H1 (cell line): ENCODE measurements at regions of chr3 and their contacts with region 1.

Region 1: DNA sequence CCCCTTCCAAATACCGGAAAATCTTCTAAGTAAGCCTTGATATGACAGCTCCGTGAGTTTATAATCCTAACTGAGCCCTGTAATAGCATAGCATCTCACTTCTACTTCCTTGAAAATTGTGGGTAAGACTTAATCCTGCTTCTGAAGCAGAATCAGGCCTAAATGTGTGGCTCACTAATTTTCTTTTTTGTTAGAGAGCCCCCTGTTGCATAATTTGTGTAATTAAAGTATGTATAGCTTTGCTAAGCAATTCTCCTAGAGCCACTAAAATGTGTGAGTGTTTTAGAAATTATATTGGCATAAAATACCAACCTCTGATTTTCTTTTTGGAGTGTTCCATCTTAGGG is 304.4 kb downstream of the FGF12 start:
- DNase-seq: no peak
- H3K4me3 ChIP-seq: no peak overlapping the region
- H3K27ac ChIP-seq: no peak overlapping the region
- H3K4me1 ChIP-seq: no peaks in the 10 kb centered on the region
- H3K27me3 ChIP-seq: no peaks in the 10 kb centered on the region
- CTCF ChIP-seq: peak in 2 of 3 experiments; percentile 7 to 18; a peak in 2 of 4 replicates
- EP300 ChIP-seq: no peak
- POLR2A ChIP-seq: no peak
- RAD21 ChIP-seq: peak; percentile 47 to 53

Region 2: DNA sequence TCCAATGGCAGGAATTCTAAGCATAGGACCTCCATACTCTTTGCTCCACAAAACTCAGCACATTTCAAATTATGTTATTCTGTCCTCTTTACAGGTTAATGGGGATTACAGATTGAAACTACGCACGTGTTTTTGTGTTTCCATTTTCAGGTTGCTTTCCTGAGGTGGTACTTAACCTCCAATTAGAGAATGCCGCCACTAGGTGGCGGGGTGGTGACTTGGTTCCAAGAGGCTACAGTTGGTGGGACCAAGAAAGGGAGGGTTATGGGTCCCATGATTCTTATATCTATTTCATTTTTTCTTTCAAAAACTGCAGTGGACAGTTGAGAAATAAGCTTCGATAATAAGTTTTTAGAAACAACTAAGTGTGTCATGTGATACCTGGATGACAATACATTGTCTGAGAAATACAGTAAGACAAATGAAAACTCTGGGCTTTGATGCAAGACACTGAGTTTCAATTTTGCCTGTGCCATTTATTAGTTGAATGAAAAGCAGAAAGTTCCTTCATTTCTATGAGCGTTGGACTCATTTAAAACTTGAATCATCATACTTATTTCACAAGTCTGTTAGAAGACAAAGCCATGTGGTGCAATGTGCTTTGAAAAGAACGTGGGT is 234.6 kb before region 1 on chr3:
- CTCF ChIA-PET with region 1: interaction called, 22 read pairs
- POLR2A ChIA-PET with region 1: no interaction called
- DNase-seq: peak; percentile 49 to 81
- H3K4me3 ChIP-seq: no peak overlapping the region
- H3K27ac ChIP-seq: no peak overlapping the region
- H3K4me1 ChIP-seq: peaks cover 0 to 3% (median 0%) of the 10 kb centered on the region in 4 experiments; a peak in 1 of 7 replicates
- H3K27me3 ChIP-seq: peaks cover 0 to 2% (median 0%) of the 10 kb centered on the region in 4 experiments; a peak in 1 of 7 replicates
- CTCF ChIP-seq: peak; percentile 58 to 79 (median 75)
- EP300 ChIP-seq: no peak
- POLR2A ChIP-seq: no peak
- RAD21 ChIP-seq: peak; percentile 77 to 84

Region 3: GRCh38 chr3:192237992-192238608 is 184.9 kb before region 1 on chr3:
- CTCF ChIA-PET with region 1: interaction called, 16 read pairs
- POLR2A ChIA-PET with region 1: no interaction called
- DNase-seq: peak; percentile 15 to 60
- H3K4me3 ChIP-seq: no peak overlapping the region
- H3K27ac ChIP-seq: no peak overlapping the region
- H3K4me1 ChIP-seq: no peaks in the 10 kb centered on the region
- H3K27me3 ChIP-seq: no peaks in the 10 kb centered on the region
- CTCF ChIP-seq: peak; percentile 27 to 77 (median 54); a peak in 3 of 4 replicates
- EP300 ChIP-seq: no peak
- POLR2A ChIP-seq: no peak
- RAD21 ChIP-seq: peak; percentile 34 to 41; a peak in 3 of 4 replicates

Region 4: DNA sequence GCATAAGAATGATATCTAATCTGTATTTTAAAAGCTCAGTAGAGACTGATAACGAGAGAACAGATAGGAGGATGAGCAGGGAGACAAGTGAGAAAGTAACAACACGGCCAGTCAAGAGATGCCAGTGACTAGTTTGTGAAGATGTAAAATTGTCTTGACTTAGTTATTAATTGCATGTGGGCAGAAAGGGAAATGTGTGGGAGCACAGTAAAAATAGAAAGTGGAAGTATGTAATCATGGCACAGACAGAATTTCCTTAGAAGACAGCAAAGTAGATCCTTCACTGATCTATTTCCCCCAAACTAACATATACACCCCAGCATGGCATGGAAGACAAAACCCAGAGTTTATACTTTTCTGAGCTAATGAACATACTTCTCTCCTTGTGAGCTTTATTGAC is 40.1 kb before region 1 on chr3:
- CTCF ChIA-PET with region 1: no interaction called
- POLR2A ChIA-PET with region 1: no interaction called
- DNase-seq: no peak
- H3K4me3 ChIP-seq: no peak overlapping the region
- H3K27ac ChIP-seq: no peak overlapping the region
- H3K4me1 ChIP-seq: no peaks in the 10 kb centered on the region
- H3K27me3 ChIP-seq: no peaks in the 10 kb centered on the region
- CTCF ChIP-seq: no peak
- EP300 ChIP-seq: no peak
- POLR2A ChIP-seq: no peak
- RAD21 ChIP-seq: no peak

Region 5: GRCh38 chr3:192409357-192409824 is 13.6 kb before region 1 on chr3:
- CTCF ChIA-PET with region 1: interaction called, 20 read pairs
- POLR2A ChIA-PET with region 1: interaction called, 3 read pairs
- DNase-seq: peak in 1 of 2 experiments; percentile 80
- H3K4me3 ChIP-seq: peak overlapping the region; percentile 58 to 84 (median 76)
- H3K27ac ChIP-seq: no peak overlapping the region
- H3K4me1 ChIP-seq: peaks cover 2 to 8% (median 4%) of the 10 kb centered on the region in 4 experiments; a peak in 6 of 7 replicates
- H3K27me3 ChIP-seq: peaks cover 6 to 50% (median 34%) of the 10 kb centered on the region in 4 experiments
- CTCF ChIP-seq: no peak
- EP300 ChIP-seq: no peak
- POLR2A ChIP-seq: no peak
- RAD21 ChIP-seq: no peak

Region 6: GRCh38 chr3:192433704-192434103 is 10.7 kb after region 1 on chr3:
- CTCF ChIA-PET with region 1: interaction called, 15 read pairs
- POLR2A ChIA-PET with region 1: no interaction called
- DNase-seq: no peak
- H3K4me3 ChIP-seq: no peak overlapping the region
- H3K27ac ChIP-seq: no peak overlapping the region
- H3K4me1 ChIP-seq: no peaks in the 10 kb centered on the region
- H3K27me3 ChIP-seq: no peaks in the 10 kb centered on the region
- CTCF ChIP-seq: no peak
- EP300 ChIP-seq: no peak
- POLR2A ChIP-seq: no peak
- RAD21 ChIP-seq: no peak

Region 7: GRCh38 chr3:192501401-192501800 is 78.4 kb after region 1 on chr3:
- CTCF ChIA-PET with region 1: no interaction called
- POLR2A ChIA-PET with region 1: no interaction called
- DNase-seq: no peak
- H3K4me3 ChIP-seq: no peak overlapping the region
- H3K27ac ChIP-seq: no peak overlapping the region
- H3K4me1 ChIP-seq: no peaks in the 10 kb centered on the region
- H3K27me3 ChIP-seq: no peaks in the 10 kb centered on the region
- CTCF ChIP-seq: no peak
- EP300 ChIP-seq: no peak
- POLR2A ChIP-seq: no peak
- RAD21 ChIP-seq: no peak

Region 8: DNA sequence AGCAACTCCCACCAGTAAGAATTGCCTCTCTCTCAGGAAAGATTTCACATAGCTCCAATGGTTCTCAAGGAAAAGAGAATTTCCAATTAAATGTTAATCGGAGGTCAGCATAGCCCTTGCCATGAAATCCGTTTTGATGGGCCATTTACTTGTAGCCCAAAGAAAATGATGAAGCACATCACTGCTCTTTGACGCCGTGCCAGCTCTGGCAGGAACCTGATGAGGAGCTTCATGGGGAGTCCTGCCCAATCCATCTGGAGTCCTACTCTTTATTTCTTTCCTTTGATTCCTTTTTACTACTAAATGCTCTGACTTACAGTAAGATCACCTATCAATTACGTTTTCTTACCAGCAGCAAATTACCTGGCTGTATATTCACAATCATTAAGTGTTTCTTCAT is 219.7 kb after region 1 on chr3:
- CTCF ChIA-PET with region 1: no interaction called
- POLR2A ChIA-PET with region 1: no interaction called
- DNase-seq: no peak
- H3K4me3 ChIP-seq: no peak overlapping the region
- H3K27ac ChIP-seq: no peak overlapping the region
- H3K4me1 ChIP-seq: no peaks in the 10 kb centered on the region
- H3K27me3 ChIP-seq: no peaks in the 10 kb centered on the region
- CTCF ChIP-seq: no peak
- EP300 ChIP-seq: no peak
- POLR2A ChIP-seq: no peak
- RAD21 ChIP-seq: no peak